T-cell (primary cell): ENCODE measurements at regions of chr3 and their contacts with region 1.

Region 1: GRCh38 chr3:37800022-37800551 is 61.6 kb upstream of the CTDSPL start:
- DNase-seq: no peak
- ATAC-seq: no peak
- H3K4me3 ChIP-seq: no peak overlapping the region
- H3K4me3 Mint-ChIP-seq: no peak overlapping the region
- H3K27ac ChIP-seq: no peak overlapping the region
- H3K27ac Mint-ChIP-seq: no peak overlapping the region
- H3K4me1 ChIP-seq: no peaks in the 10 kb centered on the region
- H3K4me1 Mint-ChIP-seq: no peaks in the 10 kb centered on the region
- H3K27me3 ChIP-seq: peaks cover 0 to 6% of the 10 kb centered on the region in 2 experiments
- H3K27me3 Mint-ChIP-seq: peaks cover 6% of the 10 kb centered on the region in 2 donors

Region 2: GRCh38 chr3:37301980-37302708 is 497.9 kb before region 1 on chr3:
- CTCF ChIA-PET with region 1: no interaction called
- POLR2A ChIA-PET with region 1: no interaction called
- DNase-seq: no peak
- ATAC-seq: no peak
- H3K4me3 ChIP-seq: no peak overlapping the region
- H3K4me3 Mint-ChIP-seq: no peak overlapping the region
- H3K27ac ChIP-seq: no peak overlapping the region
- H3K27ac Mint-ChIP-seq: peak overlapping the region in 1 of 2 donors; percentile 10
- H3K4me1 ChIP-seq: no peaks in the 10 kb centered on the region
- H3K4me1 Mint-ChIP-seq: peaks cover 13 to 18% (median 18%) of the 10 kb centered on the region in 3 donors
- H3K27me3 ChIP-seq: no peaks in the 10 kb centered on the region
- H3K27me3 Mint-ChIP-seq: no peaks in the 10 kb centered on the region

Region 3: DNA sequence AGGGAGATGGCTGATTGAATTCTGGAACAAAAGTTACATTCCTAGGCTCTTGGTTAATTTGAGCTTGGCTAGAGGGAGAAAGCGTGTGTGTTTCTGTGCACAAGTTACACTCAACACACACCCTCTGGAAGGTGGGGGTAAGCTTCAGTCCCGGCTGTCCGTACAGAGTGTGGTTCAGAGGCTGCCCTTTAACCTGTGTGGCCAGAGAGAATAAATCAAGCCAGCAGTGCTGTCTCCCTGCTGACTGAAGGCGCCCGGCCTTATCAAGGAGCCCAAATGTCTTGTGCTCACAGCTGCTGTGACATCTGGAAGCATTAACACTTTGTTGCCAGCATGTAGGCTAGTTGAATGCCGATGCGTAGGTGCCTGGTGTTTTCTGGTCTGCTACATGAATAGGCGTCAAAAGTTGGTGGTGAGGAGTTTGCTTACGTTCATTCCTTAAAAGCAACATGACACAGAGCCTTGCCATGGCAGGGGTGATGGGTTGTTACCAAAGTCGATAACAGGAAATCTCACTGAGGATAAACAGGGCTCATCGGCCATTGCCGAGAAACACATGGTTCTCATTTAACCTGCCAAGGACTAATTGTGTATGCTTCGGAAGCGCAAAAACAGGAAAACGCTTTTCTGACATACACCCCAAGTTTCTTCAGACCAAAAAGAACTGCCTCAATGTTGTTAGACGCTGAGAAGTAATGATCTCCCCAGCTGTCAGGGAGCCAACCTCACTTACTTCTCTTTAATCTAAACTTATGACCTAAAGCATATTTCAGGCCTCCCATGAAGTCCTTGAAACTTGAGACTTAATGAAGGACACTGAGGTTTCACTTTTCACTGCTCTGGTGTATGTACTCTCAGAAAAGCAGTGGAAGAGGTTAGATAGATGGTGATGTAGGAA is 34.2 kb before region 1 on chr3:
- CTCF ChIA-PET with region 1: no interaction called
- POLR2A ChIA-PET with region 1: interaction called in 1 of 2 experiments, 10 read pairs
- DNase-seq: no peak
- ATAC-seq: no peak
- H3K4me3 ChIP-seq: no peak overlapping the region
- H3K4me3 Mint-ChIP-seq: no peak overlapping the region
- H3K27ac ChIP-seq: no peak overlapping the region
- H3K27ac Mint-ChIP-seq: no peak overlapping the region
- H3K4me1 ChIP-seq: no peaks in the 10 kb centered on the region
- H3K4me1 Mint-ChIP-seq: peaks cover 0 to 15% (median 0%) of the 10 kb centered on the region in 3 donors
- H3K27me3 ChIP-seq: peaks cover 0 to 4% of the 10 kb centered on the region in 2 experiments
- H3K27me3 Mint-ChIP-seq: peaks cover 11 to 18% of the 10 kb centered on the region in 2 donors

Region 4: GRCh38 chr3:37824954-37825328 is 24.9 kb after region 1 on chr3:
- CTCF ChIA-PET with region 1: no interaction called
- POLR2A ChIA-PET with region 1: no interaction called
- DNase-seq: no peak
- ATAC-seq: no peak
- H3K4me3 ChIP-seq: no peak overlapping the region
- H3K4me3 Mint-ChIP-seq: no peak overlapping the region
- H3K27ac ChIP-seq: no peak overlapping the region
- H3K27ac Mint-ChIP-seq: no peak overlapping the region
- H3K4me1 ChIP-seq: peaks cover 0 to 3% of the 10 kb centered on the region in 2 experiments
- H3K4me1 Mint-ChIP-seq: no peaks in the 10 kb centered on the region
- H3K27me3 ChIP-seq: peaks cover 0 to 6% of the 10 kb centered on the region in 2 experiments
- H3K27me3 Mint-ChIP-seq: peaks cover 3 to 11% of the 10 kb centered on the region in 2 donors

Region 5: GRCh38 chr3:39086144-39086543 is 1286.1 kb after region 1 on chr3:
- CTCF ChIA-PET with region 1: no interaction called
- POLR2A ChIA-PET with region 1: no interaction called
- DNase-seq: no peak
- ATAC-seq: no peak
- H3K4me3 ChIP-seq: no peak overlapping the region
- H3K4me3 Mint-ChIP-seq: no peak overlapping the region
- H3K27ac ChIP-seq: no peak overlapping the region
- H3K27ac Mint-ChIP-seq: peak overlapping the region in 1 of 2 donors; percentile 65
- H3K4me1 ChIP-seq: no peaks in the 10 kb centered on the region
- H3K4me1 Mint-ChIP-seq: peaks cover 0 to 3% (median 0%) of the 10 kb centered on the region in 3 donors
- H3K27me3 ChIP-seq: no peaks in the 10 kb centered on the region
- H3K27me3 Mint-ChIP-seq: no peaks in the 10 kb centered on the region